H1 (cell line): ENCODE measurements at regions of chr2 and their contacts with region 1.

Region 1: GRCh38 chr2:204260162-204260877 is 285.0 kb upstream of the PARD3B start:
- DNase-seq: peak; percentile 57 to 84
- H3K4me3 ChIP-seq: no peak overlapping the region
- H3K27ac ChIP-seq: no peak overlapping the region
- H3K4me1 ChIP-seq: peaks cover 2 to 11% (median 6%) of the 10 kb centered on the region in 4 experiments; a peak in 4 of 7 replicates
- H3K27me3 ChIP-seq: no peaks in the 10 kb centered on the region
- CTCF ChIP-seq: peak; percentile 34 to 91 (median 73)
- EP300 ChIP-seq: no peak
- POLR2A ChIP-seq: no peak
- RAD21 ChIP-seq: peak; percentile 89

Region 2: GRCh38 chr2:204145263-204145751 is 115.0 kb before region 1 on chr2:
- CTCF ChIA-PET with region 1: interaction called, 21 read pairs
- POLR2A ChIA-PET with region 1: no interaction called
- DNase-seq: peak; percentile 56 to 92
- H3K4me3 ChIP-seq: no peak overlapping the region; a peak in 1 of 8 replicates
- H3K27ac ChIP-seq: no peak overlapping the region
- H3K4me1 ChIP-seq: no peaks in the 10 kb centered on the region
- H3K27me3 ChIP-seq: no peaks in the 10 kb centered on the region
- CTCF ChIP-seq: peak; percentile 86 to 90 (median 89)
- EP300 ChIP-seq: no peak
- POLR2A ChIP-seq: no peak
- RAD21 ChIP-seq: peak; percentile 96 to 98

Region 3: DNA sequence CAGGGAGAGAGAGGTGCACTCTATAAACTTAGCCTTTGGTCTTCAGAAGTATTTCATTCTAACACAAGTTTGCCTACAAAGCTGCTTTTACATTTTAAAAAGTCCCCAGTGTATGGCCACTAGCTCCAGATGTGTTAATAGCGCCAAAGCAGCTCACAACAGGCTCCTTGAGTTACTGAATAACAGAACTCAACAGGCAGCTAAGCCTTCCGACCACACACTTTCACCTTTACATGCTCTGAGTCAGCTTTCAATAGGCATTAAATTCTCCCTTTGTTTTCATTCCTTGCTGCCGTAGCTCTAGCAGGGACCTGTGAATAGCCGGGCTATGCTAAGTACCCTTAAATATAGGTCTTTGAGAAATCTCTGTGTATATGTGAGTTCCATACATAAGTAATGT is 22.2 kb after region 1 on chr2:
- CTCF ChIA-PET with region 1: interaction called, 17 read pairs
- POLR2A ChIA-PET with region 1: no interaction called
- DNase-seq: peak in 1 of 2 experiments; percentile 66
- H3K4me3 ChIP-seq: peak overlapping the region in 1 of 4 experiments; percentile 17; a peak in 1 of 8 replicates
- H3K27ac ChIP-seq: 0 out of 2 replicates have a peak overlapping the region, but pooled peaks have one; percentile 47
- H3K4me1 ChIP-seq: peaks cover 4 to 16% (median 14%) of the 10 kb centered on the region in 4 experiments; a peak in 5 of 7 replicates
- H3K27me3 ChIP-seq: peaks cover 0 to 3% (median 0%) of the 10 kb centered on the region in 4 experiments; a peak in 3 of 7 replicates
- CTCF ChIP-seq: no peak
- EP300 ChIP-seq: no peak
- POLR2A ChIP-seq: no peak
- RAD21 ChIP-seq: peak in 1 of 2 experiments; percentile 7; a peak in 1 of 4 replicates

Region 4: GRCh38 chr2:204298404-204298803 is 38.1 kb after region 1 on chr2:
- CTCF ChIA-PET with region 1: interaction called, 16 read pairs
- POLR2A ChIA-PET with region 1: no interaction called
- DNase-seq: no peak
- H3K4me3 ChIP-seq: no peak overlapping the region
- H3K27ac ChIP-seq: no peak overlapping the region
- H3K4me1 ChIP-seq: no peaks in the 10 kb centered on the region
- H3K27me3 ChIP-seq: no peaks in the 10 kb centered on the region
- CTCF ChIP-seq: no peak
- EP300 ChIP-seq: no peak
- POLR2A ChIP-seq: no peak
- RAD21 ChIP-seq: no peak

Region 5: DNA sequence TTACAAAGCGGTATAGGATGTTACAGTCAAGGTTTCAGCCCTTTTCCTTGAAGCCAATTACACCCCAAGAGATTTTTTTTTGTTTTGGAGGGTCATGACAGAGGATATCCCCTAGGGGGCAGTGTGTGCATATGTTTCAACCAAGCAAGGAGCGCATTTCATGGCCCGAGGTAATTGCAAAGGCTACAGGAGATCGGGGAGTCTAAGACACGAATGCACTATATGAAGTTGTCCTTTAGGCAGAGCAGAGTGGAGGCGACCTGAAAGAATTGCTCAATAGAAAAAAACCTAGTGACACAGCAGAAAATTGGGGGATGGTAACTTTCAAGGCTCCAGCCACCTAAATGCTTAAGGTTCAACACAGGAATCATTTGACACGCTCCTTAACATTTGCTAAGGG is 65.1 kb after region 1 on chr2:
- CTCF ChIA-PET with region 1: interaction called, 34 read pairs
- POLR2A ChIA-PET with region 1: no interaction called
- DNase-seq: peak; percentile 44 to 67
- H3K4me3 ChIP-seq: no peak overlapping the region
- H3K27ac ChIP-seq: no peak overlapping the region
- H3K4me1 ChIP-seq: peaks cover 0 to 3% (median 0%) of the 10 kb centered on the region in 4 experiments; a peak in 2 of 7 replicates
- H3K27me3 ChIP-seq: no peaks in the 10 kb centered on the region
- CTCF ChIP-seq: peak; percentile 10 to 72 (median 71)
- EP300 ChIP-seq: no peak
- POLR2A ChIP-seq: no peak
- RAD21 ChIP-seq: peak; percentile 95 to 96

Region 6: DNA sequence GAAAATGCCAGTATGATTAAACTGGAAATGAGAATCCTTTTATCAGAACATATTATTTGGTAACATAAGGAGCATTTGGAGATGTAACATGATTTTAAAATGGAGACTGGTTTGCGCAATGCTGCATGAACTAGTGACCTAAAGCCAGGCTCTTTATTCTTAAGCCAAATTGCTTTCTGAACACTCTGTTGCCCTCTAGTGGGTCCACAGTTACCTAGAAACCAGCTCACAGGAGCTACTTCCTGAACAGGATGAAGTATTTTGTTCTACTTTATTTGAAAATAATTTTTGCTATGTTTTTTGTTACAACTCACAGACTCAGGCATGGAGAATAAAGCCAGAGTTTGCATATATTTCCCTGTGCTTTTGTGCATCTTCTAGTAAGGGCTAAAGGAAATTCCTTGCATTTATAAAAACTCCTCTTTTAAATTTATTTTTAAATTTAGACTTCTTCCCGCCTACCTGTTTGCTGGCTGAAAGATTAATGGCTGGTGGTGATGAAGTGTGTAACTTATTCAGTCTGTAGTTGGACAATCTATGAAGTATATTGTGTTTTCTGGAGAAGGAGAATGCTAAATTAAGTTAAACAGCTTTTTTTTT is 431.7 kb after region 1 on chr2:
- CTCF ChIA-PET with region 1: interaction called, 30 read pairs
- POLR2A ChIA-PET with region 1: no interaction called
- DNase-seq: peak in 1 of 2 experiments; percentile 9
- H3K4me3 ChIP-seq: no peak overlapping the region
- H3K27ac ChIP-seq: no peak overlapping the region
- H3K4me1 ChIP-seq: no peaks in the 10 kb centered on the region
- H3K27me3 ChIP-seq: no peaks in the 10 kb centered on the region
- CTCF ChIP-seq: peak in 2 of 3 experiments; percentile 71 to 72; a peak in 3 of 4 replicates
- EP300 ChIP-seq: no peak
- POLR2A ChIP-seq: no peak
- RAD21 ChIP-seq: peak; percentile 89 to 91